Upper lobe of right lung (tissue), 1 donor: ENCODE measurements at regions of chr14 and their contacts with region 1.

Region 1: DNA sequence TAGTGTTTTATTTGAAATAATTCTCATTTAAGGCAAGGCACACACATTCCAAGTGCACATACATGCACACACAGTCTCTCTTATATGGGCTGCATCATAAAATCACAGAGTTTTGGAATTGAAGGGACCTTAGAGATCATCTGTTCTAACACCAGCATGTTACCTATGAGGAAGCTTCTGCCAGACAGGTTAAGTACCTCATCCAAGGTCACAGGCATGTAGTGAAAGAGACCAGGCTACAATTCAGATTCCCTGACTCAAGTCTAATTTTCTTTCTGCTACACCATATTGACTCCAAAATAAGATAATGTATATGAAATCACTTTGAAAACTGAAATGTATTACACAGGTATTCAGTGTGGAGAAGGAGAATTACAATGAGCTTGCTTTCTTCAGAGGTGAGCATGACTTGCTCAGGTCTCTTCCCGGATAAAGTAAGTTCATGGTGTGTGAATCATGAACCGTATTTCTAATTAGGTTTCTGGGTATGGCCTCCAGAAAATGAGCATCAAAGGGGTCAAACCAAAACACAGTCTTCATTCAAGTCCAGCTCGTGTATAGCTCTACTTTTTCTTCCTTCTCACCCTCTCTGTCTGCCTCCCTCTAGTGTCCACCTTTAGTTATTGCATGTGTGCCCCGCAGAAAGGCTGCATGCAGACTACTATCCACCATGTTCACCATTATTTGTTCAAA is 411.9 kb downstream of the FUT8 start:
- DNase-seq: no peak
- ATAC-seq: peak; percentile 92
- H3K4me3 ChIP-seq: no peak overlapping the region
- H3K27ac ChIP-seq: no peak overlapping the region
- H3K4me1 ChIP-seq: no peaks in the 10 kb centered on the region
- H3K27me3 ChIP-seq: peaks cover 3% of the 10 kb centered on the region
- CTCF ChIP-seq: peak; percentile 97

Region 2: DNA sequence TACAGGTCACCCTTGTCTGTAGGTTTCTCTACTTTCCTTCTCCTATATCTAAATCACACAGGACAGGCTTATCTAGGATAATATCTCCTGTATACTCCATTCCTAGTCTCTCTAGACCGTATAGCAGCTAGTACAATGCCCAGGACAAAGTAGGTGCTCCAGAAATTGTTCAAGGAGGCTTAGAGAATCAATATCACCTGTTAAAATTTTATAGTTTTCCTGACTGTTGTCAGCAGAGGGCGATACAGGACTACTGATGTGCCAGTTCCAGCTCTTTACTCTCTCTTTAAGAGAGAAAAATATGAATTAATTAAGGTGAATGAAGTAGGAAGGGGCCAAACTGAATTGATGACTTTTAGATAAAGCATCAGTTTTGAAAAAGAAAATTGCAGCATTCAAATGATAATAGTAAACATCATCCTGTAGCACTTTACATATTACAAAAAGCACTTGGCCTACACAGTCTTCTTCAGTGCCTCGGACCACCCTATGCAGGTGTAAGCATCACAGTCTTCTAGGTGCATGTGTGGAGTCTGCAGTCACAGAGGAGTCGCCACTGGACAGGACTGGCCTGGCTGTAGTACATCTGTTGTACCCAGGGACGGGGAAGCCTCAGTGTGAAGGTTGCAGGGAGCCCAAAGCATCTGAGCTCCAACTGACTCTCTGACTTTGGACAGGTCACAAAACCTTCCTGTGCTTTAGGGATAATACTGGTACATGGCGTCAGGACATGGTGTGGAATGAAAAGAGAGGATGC is 660.2 kb before region 1 on chr14:
- intact Hi-C with region 1: loop called (anchors 10 kb)
- DNase-seq: no peak
- ATAC-seq: peak; percentile 77
- H3K4me3 ChIP-seq: no peak overlapping the region
- H3K27ac ChIP-seq: no peak overlapping the region
- H3K4me1 ChIP-seq: no peaks in the 10 kb centered on the region
- H3K27me3 ChIP-seq: no peaks in the 10 kb centered on the region
- CTCF ChIP-seq: peak; percentile 73

Region 3: GRCh38 chr14:65412032-65412846 is 412.2 kb before region 1 on chr14 and contains the start of gene FUT8:
- intact Hi-C with region 1: loop called (anchors 10 kb)
- DNase-seq: peak; percentile 98
- ATAC-seq: peak; percentile 95
- H3K4me3 ChIP-seq: peak within 1 kb of the TSS; percentile 85
- H3K27ac ChIP-seq: peak within 1 kb of the TSS; percentile 96
- H3K4me1 ChIP-seq: peaks cover 11% of the 10 kb centered on the region
- H3K27me3 ChIP-seq: no peaks in the 10 kb centered on the region
- CTCF ChIP-seq: peak; percentile 57
- total RNA-seq, gene FUT8: 31.8 TPM

Region 4: DNA sequence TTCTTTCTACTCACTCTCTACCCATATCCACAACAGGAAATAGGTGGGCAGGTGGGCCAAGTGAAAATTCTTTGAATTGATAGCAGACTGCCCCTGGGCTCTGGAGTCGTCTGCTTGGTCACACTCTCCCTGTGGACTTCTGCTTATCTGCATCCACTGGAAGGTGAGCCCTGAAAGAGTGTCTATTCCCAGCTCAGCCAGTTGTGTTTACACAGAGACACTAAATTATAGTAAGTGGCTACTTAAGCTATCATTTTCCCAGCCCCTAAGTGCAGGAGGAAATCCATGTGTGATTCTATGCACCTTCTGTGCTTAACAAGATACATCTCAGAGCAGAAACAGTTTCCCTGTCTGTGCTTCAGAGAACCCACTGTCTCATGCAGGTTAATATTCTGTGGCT is 73.5 kb before region 1 on chr14:
- intact Hi-C with region 1: no loop called
- DNase-seq: no peak
- ATAC-seq: no peak
- H3K4me3 ChIP-seq: no peak overlapping the region
- H3K27ac ChIP-seq: no peak overlapping the region
- H3K4me1 ChIP-seq: no peaks in the 10 kb centered on the region
- H3K27me3 ChIP-seq: no peaks in the 10 kb centered on the region
- CTCF ChIP-seq: no peak